ENCODE measurements at regions of chr16 and their contacts with region 1.

Region 1: DNA sequence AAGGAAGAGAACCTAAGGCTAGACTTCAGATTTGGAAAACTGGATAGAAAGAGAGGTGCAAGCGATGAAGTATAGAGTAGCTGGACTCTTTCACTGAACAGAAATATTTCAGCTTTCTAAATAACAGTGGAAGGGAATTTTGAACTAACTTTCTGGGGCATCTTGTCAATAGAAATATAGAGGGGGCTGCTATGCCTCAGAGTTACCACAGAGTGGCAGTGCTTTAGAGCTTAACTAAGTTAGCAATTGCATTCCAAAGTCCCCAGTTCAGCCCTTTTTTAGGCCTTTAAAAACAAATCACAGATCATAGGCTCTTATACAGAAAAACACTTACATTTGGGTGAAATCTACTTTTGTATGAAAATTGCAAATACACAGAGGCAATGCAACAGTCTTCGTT is 154.2 kb upstream of the CDH8 start:
- DNase-seq: no peak
- ATAC-seq: peak; percentile 88
- H3K4me3 Mint-ChIP-seq: no peak overlapping the region
- H3K27ac Mint-ChIP-seq: no peak overlapping the region
- H3K4me1 Mint-ChIP-seq: peaks cover 4% of the 10 kb centered on the region; the same call in 1 of the 2 replicates
- H3K27me3 Mint-ChIP-seq: no peaks in the 10 kb centered on the region
- CTCF ChIP-seq: peak; percentile 56

Region 2: GRCh38 chr16:62213763-62214162 is 23.3 kb after region 1 on chr16:
- CTCF ChIA-PET with region 1: interaction called, 20 read pairs
- POLR2A ChIA-PET with region 1: interaction called, 3 read pairs
- DNase-seq: peak; percentile 76
- ATAC-seq: peak; percentile 100
- H3K4me3 Mint-ChIP-seq: no peak overlapping the region
- H3K27ac Mint-ChIP-seq: no peak overlapping the region
- H3K4me1 Mint-ChIP-seq: peaks cover 9% of the 10 kb centered on the region
- H3K27me3 Mint-ChIP-seq: no peaks in the 10 kb centered on the region
- CTCF ChIP-seq: peak; percentile 71

Region 3: DNA sequence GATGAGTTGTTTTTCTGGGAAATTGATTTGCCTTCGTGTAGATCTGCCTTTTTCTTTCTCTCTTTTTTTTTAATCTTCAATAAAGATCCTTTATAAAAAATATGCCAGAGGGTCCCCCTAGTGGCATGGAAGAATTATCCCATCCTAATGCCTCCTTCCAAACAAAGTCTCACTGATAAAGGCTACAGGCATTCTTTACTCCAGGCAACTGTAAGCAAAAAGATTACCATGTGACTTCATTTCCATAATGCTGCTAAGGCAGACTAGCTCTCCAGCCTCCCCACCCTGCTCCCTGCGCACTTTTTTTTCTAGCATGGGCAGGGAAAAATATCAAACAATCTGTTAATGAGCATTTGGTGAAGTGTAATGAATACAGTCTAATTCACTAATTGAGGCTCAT is 66.0 kb after region 1 on chr16:
- CTCF ChIA-PET with region 1: interaction called, 14 read pairs
- POLR2A ChIA-PET with region 1: no interaction called
- DNase-seq: no peak
- ATAC-seq: peak; percentile 89
- H3K4me3 Mint-ChIP-seq: no peak overlapping the region
- H3K27ac Mint-ChIP-seq: no peak overlapping the region
- H3K4me1 Mint-ChIP-seq: peaks cover 37% of the 10 kb centered on the region
- H3K27me3 Mint-ChIP-seq: peaks cover 7% of the 10 kb centered on the region
- CTCF ChIP-seq: peak; percentile 51; the same call in 1 of the 2 replicates

Region 4: DNA sequence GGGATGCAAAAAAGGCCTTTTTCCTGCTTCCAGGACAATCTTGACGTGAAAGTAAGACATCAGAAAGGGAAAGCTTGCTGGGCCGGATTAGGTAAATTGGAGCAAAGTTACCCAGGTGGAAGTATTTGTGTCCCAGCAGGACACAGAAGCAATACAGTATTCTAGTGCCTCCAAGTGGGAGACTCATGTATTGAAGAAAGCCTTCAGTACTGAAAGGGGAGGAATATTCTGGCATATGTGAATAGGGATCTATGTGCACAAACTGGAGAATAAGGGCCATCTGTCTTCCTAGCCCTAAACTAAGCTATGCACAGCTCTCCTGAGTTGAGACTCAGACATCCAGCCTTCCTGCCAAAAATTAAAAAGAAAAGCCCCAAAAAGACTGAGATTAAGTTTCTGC is 173.1 kb after region 1 on chr16:
- CTCF ChIA-PET with region 1: interaction called, 10 read pairs
- POLR2A ChIA-PET with region 1: no interaction called
- DNase-seq: no peak
- ATAC-seq: peak; percentile 97
- H3K4me3 Mint-ChIP-seq: no peak overlapping the region
- H3K27ac Mint-ChIP-seq: no peak overlapping the region; the same call in 1 of the 2 replicates
- H3K4me1 Mint-ChIP-seq: peaks cover 20% of the 10 kb centered on the region
- H3K27me3 Mint-ChIP-seq: no peaks in the 10 kb centered on the region
- CTCF ChIP-seq: 0 out of 2 replicates have a peak, but pooled peaks have one; percentile 24